H1 (cell line): ENCODE measurements at regions of chr1 and their contacts with region 1.

Region 1: GRCh38 chr1:24657781-24658180 is 14.7 kb downstream of the SRRM1 start:
- DNase-seq: no peak
- H3K4me3 ChIP-seq: no peak overlapping the region
- H3K27ac ChIP-seq: no peak overlapping the region
- H3K4me1 ChIP-seq: no peaks in the 10 kb centered on the region
- H3K27me3 ChIP-seq: no peaks in the 10 kb centered on the region
- CTCF ChIP-seq: no peak
- EP300 ChIP-seq: no peak
- POLR2A ChIP-seq: no peak
- RAD21 ChIP-seq: no peak

Region 2: DNA sequence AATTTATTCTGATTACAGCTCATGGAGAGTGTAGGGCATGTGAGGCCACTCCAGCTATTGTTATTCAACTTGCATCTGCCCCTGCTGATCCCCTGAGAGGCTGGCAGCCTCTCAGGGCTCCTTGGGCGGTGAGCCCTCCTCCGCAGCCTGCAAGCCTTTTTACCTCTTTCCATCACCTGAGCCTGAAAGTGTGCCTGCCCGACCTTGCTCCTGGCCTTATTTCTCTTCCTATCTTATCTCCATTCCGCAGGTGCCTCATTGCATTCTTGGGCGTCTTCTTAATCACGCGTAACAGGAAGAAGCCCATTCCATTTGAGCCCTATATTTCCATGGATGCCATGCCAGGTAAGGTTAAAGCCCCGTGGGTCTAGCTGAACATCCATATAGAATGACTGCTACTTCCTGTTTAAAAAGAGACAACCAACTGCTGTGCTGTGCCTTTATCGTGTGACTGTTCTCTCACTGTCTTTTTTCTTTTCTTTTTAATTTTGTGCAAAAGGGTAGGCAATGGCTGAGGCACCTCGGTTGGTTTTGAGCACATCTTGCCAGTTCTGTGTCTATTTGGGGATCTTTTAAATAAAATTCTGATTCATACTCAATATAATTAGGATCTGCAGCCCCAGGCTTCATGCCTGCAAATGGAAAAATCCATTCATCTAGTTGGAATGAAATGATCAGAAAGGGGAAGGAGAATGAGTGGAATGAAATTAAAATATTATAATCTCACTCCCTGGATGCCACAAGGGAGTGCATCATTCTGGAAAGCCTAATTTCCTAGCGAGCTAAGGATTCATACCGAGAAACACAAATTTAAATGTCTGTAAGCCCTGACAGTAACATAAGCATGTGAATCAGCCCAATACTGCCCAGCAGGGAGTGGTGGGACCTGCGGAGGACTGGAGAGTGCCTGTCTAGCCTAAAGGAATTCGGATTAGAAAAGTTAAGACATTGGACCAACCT is 193.7 kb before region 1 on chr1:
- CTCF ChIA-PET with region 1: no interaction called
- POLR2A ChIA-PET with region 1: no interaction called
- DNase-seq: peak; percentile 59 to 65
- H3K4me3 ChIP-seq: peak overlapping the region; percentile 7 to 52 (median 24); a peak in 6 of 8 replicates
- H3K27ac ChIP-seq: no peak overlapping the region; the same call in 1 of the 2 replicates
- H3K4me1 ChIP-seq: peaks cover 11 to 22% (median 17%) of the 10 kb centered on the region in 4 experiments; a peak in 6 of 7 replicates
- H3K27me3 ChIP-seq: no peaks in the 10 kb centered on the region
- CTCF ChIP-seq: no peak
- EP300 ChIP-seq: no peak
- POLR2A ChIP-seq: no peak
- RAD21 ChIP-seq: no peak

Region 3: GRCh38 chr1:24567792-24568388 is 89.9 kb before region 1 on chr1:
- CTCF ChIA-PET with region 1: no interaction called
- POLR2A ChIA-PET with region 1: no interaction called
- DNase-seq: no peak
- H3K4me3 ChIP-seq: no peak overlapping the region
- H3K27ac ChIP-seq: no peak overlapping the region
- H3K4me1 ChIP-seq: peaks cover 2 to 11% (median 3%) of the 10 kb centered on the region in 4 experiments; a peak in 4 of 7 replicates
- H3K27me3 ChIP-seq: no peaks in the 10 kb centered on the region
- CTCF ChIP-seq: peak in 2 of 3 experiments; percentile 36 to 39; a peak in 2 of 4 replicates
- EP300 ChIP-seq: no peak
- POLR2A ChIP-seq: no peak
- RAD21 ChIP-seq: 0 out of 4 replicates have a peak, but pooled peaks of 1 of the 2 experiments have one; percentile 27

Region 4: GRCh38 chr1:24642481-24643361 is 15.1 kb before region 1 on chr1 and contains the start of gene SRRM1:
- CTCF ChIA-PET with region 1: no interaction called
- POLR2A ChIA-PET with region 1: interaction called, 199 read pairs
- DNase-seq: peak; percentile 93 to 99
- H3K4me3 ChIP-seq: peak within 1 kb of the TSS; percentile 76 to 98 (median 94)
- H3K27ac ChIP-seq: peak within 1 kb of the TSS; percentile 94
- H3K4me1 ChIP-seq: peaks cover 0 to 6% (median 4%) of the 10 kb centered on the region in 4 experiments; a peak in 5 of 7 replicates
- H3K27me3 ChIP-seq: no peaks in the 10 kb centered on the region
- CTCF ChIP-seq: peak in 1 of 3 experiments; percentile 21; a peak in 1 of 4 replicates
- EP300 ChIP-seq: no peak
- POLR2A ChIP-seq: peak; percentile 90 to 93; a peak in 2 of 3 replicates
- RAD21 ChIP-seq: no peak
- total RNA-seq, gene SRRM1: 230 and 255 TPM in 2 replicates

Region 5: GRCh38 chr1:24673336-24673735 is 15.6 kb after region 1 on chr1:
- CTCF ChIA-PET with region 1: interaction called, 3 read pairs
- POLR2A ChIA-PET with region 1: interaction called, 199 read pairs
- DNase-seq: no peak
- H3K4me3 ChIP-seq: no peak overlapping the region
- H3K27ac ChIP-seq: no peak overlapping the region
- H3K4me1 ChIP-seq: no peaks in the 10 kb centered on the region
- H3K27me3 ChIP-seq: no peaks in the 10 kb centered on the region
- CTCF ChIP-seq: no peak
- EP300 ChIP-seq: no peak
- POLR2A ChIP-seq: no peak
- RAD21 ChIP-seq: no peak

Region 6: DNA sequence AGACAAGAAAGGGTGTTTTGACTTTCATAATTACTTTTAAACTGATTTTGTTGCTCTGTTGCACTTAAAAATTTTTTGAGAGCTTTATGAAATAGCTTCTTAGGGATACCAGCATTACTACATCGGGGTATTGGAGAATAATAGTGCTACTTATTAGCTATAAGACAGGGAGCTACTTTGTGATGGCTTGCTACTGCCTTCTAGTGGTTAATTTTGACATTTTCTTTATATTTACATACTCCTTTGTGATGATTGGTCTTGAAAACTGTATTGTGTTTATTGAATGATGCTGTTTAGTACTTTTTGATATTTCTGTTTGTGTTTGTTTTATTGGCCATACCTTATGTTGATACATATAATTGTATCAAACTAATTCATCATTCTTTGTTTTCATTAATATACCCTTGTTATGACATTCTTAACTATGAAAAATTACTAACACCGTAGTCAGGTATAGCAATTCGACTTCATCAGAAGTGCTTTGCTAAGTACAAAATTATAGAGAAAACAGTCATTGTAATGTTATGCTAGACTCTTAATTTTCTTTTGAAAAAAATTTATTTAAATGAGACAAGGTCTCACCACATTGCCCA is 173.0 kb after region 1 on chr1:
- CTCF ChIA-PET with region 1: interaction called, 10 read pairs
- POLR2A ChIA-PET with region 1: interaction called, 5 read pairs
- DNase-seq: no peak
- H3K4me3 ChIP-seq: no peak overlapping the region
- H3K27ac ChIP-seq: no peak overlapping the region
- H3K4me1 ChIP-seq: no peaks in the 10 kb centered on the region; a peak in 1 of 7 replicates
- H3K27me3 ChIP-seq: no peaks in the 10 kb centered on the region
- CTCF ChIP-seq: peak in 2 of 3 experiments; percentile 43 to 59; a peak in 2 of 4 replicates
- EP300 ChIP-seq: no peak
- POLR2A ChIP-seq: no peak
- RAD21 ChIP-seq: peak; percentile 74 to 84